Activated CD4-positive, alpha-beta T cell treated with anti-CD3 and anti-CD28 coated beads for 36 hours (primary cell): ENCODE measurements at regions of chr4 and their contacts with region 1.

Region 1: GRCh38 chr4:17447675-17448298 is 64.1 kb downstream of the QDPR start:
- DNase-seq: peak; percentile 67
- ATAC-seq: peak; percentile 89
- H3K4me3 Mint-ChIP-seq: no peak overlapping the region
- H3K27ac Mint-ChIP-seq: no peak overlapping the region
- H3K4me1 Mint-ChIP-seq: no peaks in the 10 kb centered on the region
- H3K27me3 Mint-ChIP-seq: peaks cover 6% of the 10 kb centered on the region

Region 2: DNA sequence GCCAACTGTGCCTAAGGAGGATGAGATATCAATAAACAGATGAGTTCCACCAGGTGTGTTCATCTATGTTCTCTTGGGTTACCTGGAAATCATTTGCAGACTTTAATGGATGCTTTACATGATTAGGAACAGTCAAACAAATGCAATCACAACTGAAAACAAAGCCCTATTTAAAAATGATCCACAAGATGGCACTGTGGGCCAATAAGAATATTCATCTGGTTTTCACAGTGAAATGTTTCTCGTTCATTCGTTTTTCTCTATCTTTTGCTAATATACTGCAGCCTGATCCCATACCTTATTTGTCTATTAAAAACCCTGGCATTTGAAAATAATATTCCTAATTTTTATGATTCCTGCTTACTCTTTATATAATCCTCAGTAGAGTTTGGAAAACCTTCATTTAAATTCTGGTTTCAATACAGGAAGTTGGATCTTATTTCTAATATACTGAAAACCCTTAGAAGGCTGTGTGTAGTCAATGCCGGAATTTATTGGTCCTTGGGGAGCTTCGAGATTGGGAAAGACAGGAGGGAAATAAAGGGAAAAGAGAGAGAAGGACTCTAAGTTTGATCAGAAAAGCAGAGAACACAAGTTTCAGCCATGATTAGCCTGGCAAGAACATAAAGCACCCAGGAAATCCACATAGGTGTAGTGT is 1157.8 kb before region 1 on chr4:
- CTCF ChIA-PET with region 1: interaction called, 3 read pairs
- POLR2A ChIA-PET with region 1: no interaction called
- intact Hi-C with region 1: loop called (anchors 2 kb)
- DNase-seq: no peak
- ATAC-seq: no peak
- H3K4me3 Mint-ChIP-seq: no peak overlapping the region
- H3K27ac Mint-ChIP-seq: no peak overlapping the region
- H3K4me1 Mint-ChIP-seq: peaks cover 4% of the 10 kb centered on the region
- H3K27me3 Mint-ChIP-seq: peaks cover 9% of the 10 kb centered on the region

Region 3: DNA sequence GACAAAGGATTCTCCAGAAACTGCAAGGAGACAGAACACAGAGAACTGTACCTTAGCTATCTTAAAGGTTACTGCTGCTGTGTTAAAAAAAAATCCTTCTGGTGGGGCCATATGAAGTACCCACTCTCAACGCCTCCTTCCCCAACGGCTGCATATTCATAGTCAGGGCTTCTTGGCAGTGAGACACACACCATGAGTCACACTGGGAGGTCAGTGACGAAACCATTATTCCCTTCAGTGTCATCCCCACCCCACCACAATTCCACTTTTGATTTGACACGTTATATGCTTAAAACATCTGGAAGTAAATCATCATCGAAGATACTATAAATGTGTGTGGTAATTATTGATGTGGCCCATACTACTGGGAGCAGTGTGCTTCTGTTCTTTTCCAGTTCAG is 820.8 kb before region 1 on chr4:
- CTCF ChIA-PET with region 1: no interaction called
- POLR2A ChIA-PET with region 1: no interaction called
- intact Hi-C with region 1: no loop called
- DNase-seq: no peak
- ATAC-seq: no peak
- H3K4me3 Mint-ChIP-seq: no peak overlapping the region
- H3K27ac Mint-ChIP-seq: no peak overlapping the region
- H3K4me1 Mint-ChIP-seq: no peaks in the 10 kb centered on the region
- H3K27me3 Mint-ChIP-seq: peaks cover 2% of the 10 kb centered on the region

Region 4: DNA sequence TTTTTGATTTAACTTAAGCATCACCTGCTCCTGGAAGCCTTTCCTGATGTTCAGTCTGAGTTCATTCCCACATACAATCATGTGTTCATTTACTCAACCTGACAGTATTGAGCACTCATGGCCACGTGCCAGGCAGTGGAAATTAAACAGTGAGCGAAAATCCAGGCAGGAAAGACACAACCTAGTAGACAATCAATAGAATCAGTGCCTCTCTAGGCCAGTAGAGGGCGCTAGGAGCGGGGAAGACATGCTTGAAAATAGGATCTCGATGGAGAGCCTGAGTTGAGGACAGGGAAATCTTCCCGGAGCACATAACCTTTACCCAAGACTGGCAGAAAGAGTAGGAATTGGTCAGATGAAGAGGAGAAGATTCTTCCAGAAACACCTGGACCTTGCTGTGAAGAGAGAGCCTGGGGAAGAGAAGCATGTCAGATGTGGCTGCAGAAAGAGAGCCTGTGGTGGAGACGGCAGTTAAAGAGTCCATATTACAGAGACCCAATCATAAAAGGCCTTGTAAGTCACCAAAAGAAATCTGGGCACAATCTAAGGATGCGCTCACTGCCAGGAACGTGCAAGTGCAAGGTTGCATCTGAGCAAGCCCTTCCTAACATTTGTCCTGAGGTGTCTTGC is 652.9 kb before region 1 on chr4:
- CTCF ChIA-PET with region 1: no interaction called
- POLR2A ChIA-PET with region 1: no interaction called
- intact Hi-C with region 1: loop called in 1 of 2 experiments (anchors 10 kb)
- DNase-seq: peak; percentile 69
- ATAC-seq: peak; percentile 33
- H3K4me3 Mint-ChIP-seq: no peak overlapping the region
- H3K27ac Mint-ChIP-seq: no peak overlapping the region
- H3K4me1 Mint-ChIP-seq: no peaks in the 10 kb centered on the region
- H3K27me3 Mint-ChIP-seq: no peaks in the 10 kb centered on the region

Region 5: GRCh38 chr4:16916719-16917337 is 531.0 kb before region 1 on chr4:
- CTCF ChIA-PET with region 1: interaction called, 6 read pairs
- POLR2A ChIA-PET with region 1: no interaction called
- intact Hi-C with region 1: loop called in 1 of 2 experiments (anchors 1 kb)
- DNase-seq: peak; percentile 88
- ATAC-seq: peak; percentile 97
- H3K4me3 Mint-ChIP-seq: no peak overlapping the region
- H3K27ac Mint-ChIP-seq: no peak overlapping the region
- H3K4me1 Mint-ChIP-seq: no peaks in the 10 kb centered on the region
- H3K27me3 Mint-ChIP-seq: no peaks in the 10 kb centered on the region

Region 6: DNA sequence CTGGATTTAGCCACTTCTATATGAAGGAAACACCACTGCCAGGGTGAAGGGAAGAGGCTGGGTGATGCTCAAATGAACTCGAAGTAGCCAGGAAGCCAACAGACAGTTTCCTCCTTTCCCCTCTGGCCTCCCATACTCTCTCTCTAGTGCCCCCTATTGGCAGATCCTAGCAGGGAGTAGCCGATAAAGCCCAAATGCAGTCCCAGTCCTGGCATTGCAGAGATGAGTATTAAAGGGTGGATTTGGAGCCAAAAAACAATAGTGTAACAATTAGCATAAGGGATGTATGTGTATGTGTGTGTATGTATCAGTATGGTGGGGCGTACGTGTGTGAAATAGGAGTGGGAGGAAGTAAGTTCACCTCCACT is 335.5 kb before region 1 on chr4:
- CTCF ChIA-PET with region 1: no interaction called
- POLR2A ChIA-PET with region 1: no interaction called
- intact Hi-C with region 1: loop called in 1 of 2 experiments (anchors 5 kb)
- DNase-seq: peak; percentile 29
- ATAC-seq: no peak
- H3K4me3 Mint-ChIP-seq: no peak overlapping the region
- H3K27ac Mint-ChIP-seq: no peak overlapping the region
- H3K4me1 Mint-ChIP-seq: no peaks in the 10 kb centered on the region
- H3K27me3 Mint-ChIP-seq: peaks cover 14% of the 10 kb centered on the region

Region 7: GRCh38 chr4:17284323-17285175 is 163.2 kb before region 1 on chr4:
- CTCF ChIA-PET with region 1: interaction called, 3 read pairs
- POLR2A ChIA-PET with region 1: no interaction called
- intact Hi-C with region 1: loop called in 1 of 2 experiments (anchors 5 kb)
- DNase-seq: no peak
- ATAC-seq: no peak
- H3K4me3 Mint-ChIP-seq: no peak overlapping the region
- H3K27ac Mint-ChIP-seq: no peak overlapping the region
- H3K4me1 Mint-ChIP-seq: no peaks in the 10 kb centered on the region
- H3K27me3 Mint-ChIP-seq: peaks cover 2% of the 10 kb centered on the region

Region 8: DNA sequence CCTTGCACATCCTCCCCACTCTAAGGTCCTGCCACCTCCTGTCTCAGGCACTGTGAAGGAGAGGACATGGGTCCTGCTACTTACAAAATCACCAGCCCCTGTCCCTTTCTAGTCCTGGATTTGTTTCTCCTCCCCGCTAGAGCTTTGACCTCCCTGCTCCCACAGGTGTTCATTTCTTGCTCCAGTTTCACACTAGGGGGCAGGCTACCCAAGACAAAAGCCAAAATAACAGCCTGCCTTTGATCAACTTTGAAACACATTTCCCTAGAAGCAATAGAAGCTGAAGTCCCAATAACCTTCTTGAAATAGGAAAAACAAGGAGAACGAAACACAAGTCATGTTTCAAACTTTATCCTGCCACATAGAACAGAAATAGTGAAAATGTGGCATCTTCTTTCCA is 100.3 kb before region 1 on chr4:
- CTCF ChIA-PET with region 1: interaction called, 20 read pairs
- POLR2A ChIA-PET with region 1: no interaction called
- intact Hi-C with region 1: loop called (anchors 1 kb)
- DNase-seq: peak; percentile 51
- ATAC-seq: peak; percentile 30
- H3K4me3 Mint-ChIP-seq: no peak overlapping the region
- H3K27ac Mint-ChIP-seq: no peak overlapping the region
- H3K4me1 Mint-ChIP-seq: no peaks in the 10 kb centered on the region
- H3K27me3 Mint-ChIP-seq: no peaks in the 10 kb centered on the region